GM13977 (cell line): ENCODE measurements at regions of chr11 and their contacts with region 1.

Region 1: GRCh38 chr11:95076416-95076815 is 9.7 kb downstream of the SRSF8 start:
- DNase-seq: no peak
- CTCF ChIP-seq: no peak

Region 2: DNA sequence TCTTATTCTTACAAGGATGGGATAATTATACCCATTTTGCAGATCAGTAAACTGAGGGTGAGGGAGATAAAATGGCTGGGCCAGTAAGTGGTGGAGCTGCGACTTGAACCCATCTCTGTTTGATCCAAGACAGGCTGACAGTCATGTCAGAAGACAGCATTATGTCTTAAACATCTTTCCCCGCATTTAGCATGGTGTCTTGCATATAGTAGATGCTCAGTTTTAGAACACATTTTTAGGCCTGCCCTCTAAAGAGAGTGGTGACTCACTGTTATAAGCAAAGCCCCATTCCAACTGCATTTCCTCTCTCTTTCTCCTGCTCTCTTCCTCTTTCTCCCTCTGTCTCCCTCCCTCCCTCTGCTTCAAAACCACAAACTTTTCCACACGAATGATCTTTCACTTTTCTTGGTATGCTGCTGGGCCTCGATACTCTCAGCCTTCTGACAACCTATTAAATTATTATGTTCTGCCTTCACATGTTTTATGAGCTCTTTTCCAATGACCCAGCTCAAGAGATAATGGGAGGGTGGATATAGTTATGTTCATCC is 128.3 kb before region 1 on chr11:
- in situ Hi-C with region 1: no loop called
- DNase-seq: no peak
- CTCF ChIP-seq: no peak

Region 3: GRCh38 chr11:95138448-95138847 is 62.0 kb after region 1 on chr11:
- in situ Hi-C with region 1: loop called (anchors 10 kb)
- DNase-seq: peak; percentile 37
- CTCF ChIP-seq: peak; percentile 60

Region 4: DNA sequence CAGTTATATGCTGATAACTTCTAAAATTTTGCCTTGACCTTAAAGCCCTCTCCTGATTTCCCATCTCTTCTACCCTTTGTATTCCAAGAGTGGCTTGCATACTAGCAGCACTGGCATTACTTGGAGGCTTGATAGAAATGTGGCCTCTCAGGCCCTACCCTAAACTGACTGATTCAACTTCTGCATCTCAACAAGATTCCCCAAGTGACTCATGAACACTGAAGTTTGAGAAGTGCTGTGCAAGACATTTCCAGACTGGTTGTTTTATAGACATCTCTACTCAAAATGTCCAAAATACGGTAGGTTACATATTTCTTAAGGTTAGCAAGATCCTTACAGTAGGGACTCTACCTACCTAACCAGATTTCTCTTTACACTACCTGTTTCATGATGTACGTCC is 106.0 kb after region 1 on chr11:
- in situ Hi-C with region 1: no loop called
- DNase-seq: no peak
- CTCF ChIP-seq: no peak